A673 (cell line): ENCODE measurements at regions of chr17 and their contacts with region 1.

Region 1: GRCh38 chr17:67376737-67377487 is at the start of gene PITPNC1:
- DNase-seq: peak; percentile 95
- H3K4me3 ChIP-seq: peak within 1 kb of the TSS; percentile 96
- H3K27ac ChIP-seq: peak within 1 kb of the TSS; percentile 91
- H3K4me1 ChIP-seq: peaks cover 21% of the 10 kb centered on the region
- H3K27me3 ChIP-seq: no peaks in the 10 kb centered on the region
- CTCF ChIP-seq: no peak
- total RNA-seq, gene PITPNC1: 34.2 and 35.5 TPM in 2 replicates

Region 2: DNA sequence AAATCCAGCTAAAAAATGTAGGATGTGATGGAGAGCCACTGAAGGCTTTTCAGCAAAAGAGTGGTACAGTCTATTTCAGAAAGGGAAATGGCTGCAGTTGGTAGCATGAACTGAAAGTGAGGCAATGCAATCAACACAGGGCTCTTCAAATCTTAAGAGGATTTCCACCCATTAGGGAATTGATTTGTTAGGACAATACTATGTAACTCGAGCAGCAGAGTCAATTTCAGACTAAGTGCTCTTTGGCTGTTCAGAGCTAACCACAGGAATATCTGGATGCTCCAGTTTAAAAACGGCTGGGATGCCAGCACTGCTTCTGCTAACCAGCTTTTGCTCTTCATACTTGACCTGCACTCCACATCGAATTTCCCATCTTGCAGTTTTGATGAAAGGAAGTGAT is 307.9 kb before region 1 on chr17:
- CTCF ChIA-PET with region 1: no interaction called
- POLR2A ChIA-PET with region 1: no interaction called
- intact Hi-C with region 1: no loop called
- DNase-seq: peak; percentile 58
- H3K4me3 ChIP-seq: no peak overlapping the region
- H3K27ac ChIP-seq: no peak overlapping the region
- H3K4me1 ChIP-seq: peaks cover 26% of the 10 kb centered on the region
- H3K27me3 ChIP-seq: no peaks in the 10 kb centered on the region
- CTCF ChIP-seq: no peak

Region 3: GRCh38 chr17:67365738-67366192 is 11.1 kb before region 1 on chr17:
- CTCF ChIA-PET with region 1: interaction called, 8 read pairs
- POLR2A ChIA-PET with region 1: interaction called, 13 read pairs
- intact Hi-C with region 1: no loop called
- DNase-seq: no peak
- H3K4me3 ChIP-seq: peak overlapping the region; percentile 93
- H3K27ac ChIP-seq: peak overlapping the region; percentile 97
- H3K4me1 ChIP-seq: peaks cover 30% of the 10 kb centered on the region
- H3K27me3 ChIP-seq: no peaks in the 10 kb centered on the region
- CTCF ChIP-seq: no peak

Region 4: GRCh38 chr17:67475236-67475937 is 98.5 kb after region 1 on chr17:
- CTCF ChIA-PET with region 1: interaction called, 21 read pairs
- POLR2A ChIA-PET with region 1: no interaction called
- intact Hi-C with region 1: loop called (anchors 1 kb)
- DNase-seq: peak; percentile 89
- H3K4me3 ChIP-seq: no peak overlapping the region
- H3K27ac ChIP-seq: peak overlapping the region; percentile 6
- H3K4me1 ChIP-seq: peaks cover 48% of the 10 kb centered on the region
- H3K27me3 ChIP-seq: no peaks in the 10 kb centered on the region
- CTCF ChIP-seq: peak; percentile 99

Region 5: DNA sequence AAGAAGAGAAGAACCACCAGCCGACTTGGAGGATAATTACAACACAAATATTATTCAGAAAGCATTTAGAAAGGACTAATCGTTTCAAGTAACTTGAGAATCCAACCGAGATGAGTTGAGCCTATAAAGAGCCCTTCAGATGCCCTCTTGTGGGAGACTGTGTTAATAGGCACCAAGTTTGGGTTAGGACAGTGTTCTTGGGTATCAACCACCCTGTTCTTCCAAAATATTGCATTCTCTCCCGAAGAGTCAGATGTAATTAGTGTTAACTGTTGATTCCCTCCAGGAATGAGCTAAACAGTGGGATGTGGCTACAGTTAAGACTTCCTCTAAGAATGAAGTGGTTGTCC is 253.0 kb after region 1 on chr17:
- CTCF ChIA-PET with region 1: interaction called, 6 read pairs
- POLR2A ChIA-PET with region 1: no interaction called
- intact Hi-C with region 1: loop called (anchors 1 kb)
- DNase-seq: peak; percentile 76
- H3K4me3 ChIP-seq: no peak overlapping the region
- H3K27ac ChIP-seq: peak overlapping the region; percentile 60
- H3K4me1 ChIP-seq: peaks cover 7% of the 10 kb centered on the region
- H3K27me3 ChIP-seq: no peaks in the 10 kb centered on the region
- CTCF ChIP-seq: peak; percentile 71